Posterior vena cava (tissue), 2 donors: ENCODE measurements at regions of chr3 and their contacts with region 1.

Region 1: DNA sequence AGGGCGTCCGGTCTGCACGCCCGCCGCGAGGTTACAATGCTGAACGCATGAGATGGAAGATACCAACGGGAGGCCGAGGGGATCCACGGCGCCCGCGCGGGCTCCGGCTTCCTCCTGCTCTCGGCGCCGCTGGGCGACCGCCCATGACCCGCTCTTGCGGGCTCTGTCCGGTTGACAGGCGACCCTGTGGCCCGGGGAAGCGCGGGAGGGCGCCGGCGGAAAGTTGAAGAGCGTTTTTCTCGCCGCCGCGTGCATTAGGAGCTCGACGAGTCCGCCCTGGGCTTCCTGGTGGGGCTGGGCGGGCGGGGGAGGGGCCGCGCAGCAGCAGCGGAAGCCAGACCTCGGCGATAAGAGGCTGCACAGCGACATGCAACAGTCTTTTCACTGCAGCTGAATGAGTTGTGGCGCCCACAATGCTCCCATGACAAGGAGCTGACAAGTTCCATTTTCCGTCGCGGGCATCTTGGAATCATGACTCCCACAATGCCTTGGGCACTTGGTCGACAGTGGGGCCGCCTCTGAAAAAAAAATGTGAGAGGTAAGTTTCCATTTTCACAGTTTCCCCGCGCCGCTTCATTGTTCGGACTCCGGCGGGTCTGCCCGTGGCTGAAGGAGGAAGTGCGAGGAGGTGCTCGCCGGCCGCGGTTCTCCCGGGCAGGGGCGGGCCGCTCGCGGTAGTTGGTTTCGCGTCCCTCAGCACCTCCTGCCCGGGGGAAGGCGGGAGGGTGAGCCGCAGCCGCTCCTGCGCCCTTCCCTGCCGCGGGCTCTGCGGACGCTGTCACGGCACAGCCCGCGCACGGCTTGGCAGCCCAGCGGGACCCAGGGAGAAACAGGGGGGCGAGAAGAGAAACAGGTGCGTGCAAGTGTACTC is at the start of gene MBNL1:
- DNase-seq: peak; percentile 92
- total RNA-seq, gene MBNL1: 393 to 453 TPM

Region 2: DNA sequence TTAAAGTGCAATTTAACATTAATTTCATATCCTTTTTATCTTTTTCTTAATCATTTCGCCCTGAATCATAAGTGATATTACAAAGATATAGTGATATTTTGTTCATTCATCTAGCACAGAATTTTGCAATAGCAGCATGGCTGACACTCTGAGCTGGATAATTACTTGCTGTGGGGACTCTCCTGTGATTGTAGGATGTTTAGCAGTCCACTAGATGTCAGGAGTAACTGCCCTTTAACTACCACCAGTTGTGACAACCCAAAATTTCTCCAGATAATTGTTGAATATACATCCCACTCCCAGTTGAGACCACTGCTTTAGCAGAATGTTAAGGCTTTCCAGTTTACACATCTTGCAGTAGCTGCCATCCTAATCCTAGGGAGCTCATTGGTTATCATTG is 196.9 kb before region 1 on chr3:
- intact Hi-C with region 1: loop called in 1 of 2 experiments (anchors 10 kb)
- DNase-seq: no peak

Region 3: GRCh38 chr3:152149832-152150231 is 119.0 kb before region 1 on chr3:
- intact Hi-C with region 1: loop called in 1 of 2 experiments (anchors 10 kb)
- DNase-seq: no peak

Region 4: DNA sequence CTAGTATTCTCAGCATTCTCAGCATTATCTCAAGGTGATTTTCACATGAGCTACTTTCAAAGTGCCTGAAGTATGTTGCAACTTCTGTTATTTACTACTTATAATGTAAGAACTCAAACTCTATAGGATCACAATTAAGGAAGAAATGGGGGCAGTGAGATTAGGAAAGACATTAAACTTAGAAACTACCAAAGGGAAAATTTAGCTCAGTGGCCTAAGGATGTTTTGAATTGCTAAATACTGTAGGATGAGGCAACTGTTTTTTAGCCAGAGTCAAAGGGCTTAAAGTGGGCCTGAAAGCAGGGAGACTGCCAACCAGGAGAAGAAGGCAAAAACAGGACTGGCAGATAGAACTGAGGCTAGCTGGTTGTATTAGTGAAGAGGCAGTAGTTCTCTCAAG is 55.6 kb before region 1 on chr3:
- intact Hi-C with region 1: loop called (anchors 10 kb)
- DNase-seq: no peak

Region 5: DNA sequence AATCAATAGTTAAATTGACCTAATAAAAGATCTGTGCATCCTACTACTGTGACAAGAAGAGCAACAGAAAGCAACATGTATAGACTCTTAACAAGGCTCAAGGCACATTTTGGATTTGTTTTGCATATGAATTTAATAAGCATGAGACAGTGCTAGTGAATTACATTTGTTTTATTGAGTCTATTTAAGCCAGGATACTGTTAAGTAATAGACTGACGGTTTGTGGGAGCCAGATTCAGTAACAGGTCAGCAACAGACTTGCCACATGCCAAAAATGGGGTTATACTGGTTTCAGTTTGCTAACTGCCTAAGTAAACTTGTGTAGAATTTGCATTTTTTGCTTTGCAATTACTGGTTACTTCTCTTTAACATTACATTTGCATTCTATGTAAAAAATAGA is 54.0 kb after region 1 on chr3:
- intact Hi-C with region 1: loop called in 1 of 2 experiments (anchors 10 kb)
- DNase-seq: no peak

Region 6: DNA sequence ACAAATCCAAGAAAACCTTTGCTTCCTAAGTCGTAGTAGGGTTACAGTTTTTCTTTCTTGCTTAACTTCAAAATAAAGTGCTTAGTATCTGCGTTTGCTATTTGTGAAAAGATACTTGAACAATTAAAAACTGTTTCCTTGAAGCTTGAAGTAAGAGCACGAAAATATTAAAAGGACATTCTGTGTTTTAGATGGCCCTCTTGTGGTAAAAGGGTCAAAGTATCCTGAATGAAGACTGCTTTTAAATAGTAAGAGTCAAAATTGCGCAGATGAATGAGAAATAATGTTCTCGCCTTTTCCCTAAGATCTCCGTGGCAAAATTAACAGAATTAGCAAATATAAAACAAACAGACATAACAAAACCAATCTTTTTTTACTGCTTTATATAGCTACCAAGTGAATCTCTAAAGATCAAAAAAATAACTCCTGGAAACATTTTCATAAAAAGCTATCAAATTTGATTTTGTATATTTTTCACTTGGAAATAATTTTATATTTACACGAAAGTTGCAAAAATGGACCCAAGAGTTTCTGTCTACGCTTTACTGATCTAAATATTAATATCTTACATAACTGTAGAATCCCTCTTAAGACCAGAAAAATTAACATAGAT is 175.3 kb after region 1 on chr3:
- intact Hi-C with region 1: loop called in 1 of 2 experiments (anchors 10 kb)
- DNase-seq: no peak